BJ (cell line): ENCODE measurements at regions of chr2 and their contacts with region 1.

Region 1: DNA sequence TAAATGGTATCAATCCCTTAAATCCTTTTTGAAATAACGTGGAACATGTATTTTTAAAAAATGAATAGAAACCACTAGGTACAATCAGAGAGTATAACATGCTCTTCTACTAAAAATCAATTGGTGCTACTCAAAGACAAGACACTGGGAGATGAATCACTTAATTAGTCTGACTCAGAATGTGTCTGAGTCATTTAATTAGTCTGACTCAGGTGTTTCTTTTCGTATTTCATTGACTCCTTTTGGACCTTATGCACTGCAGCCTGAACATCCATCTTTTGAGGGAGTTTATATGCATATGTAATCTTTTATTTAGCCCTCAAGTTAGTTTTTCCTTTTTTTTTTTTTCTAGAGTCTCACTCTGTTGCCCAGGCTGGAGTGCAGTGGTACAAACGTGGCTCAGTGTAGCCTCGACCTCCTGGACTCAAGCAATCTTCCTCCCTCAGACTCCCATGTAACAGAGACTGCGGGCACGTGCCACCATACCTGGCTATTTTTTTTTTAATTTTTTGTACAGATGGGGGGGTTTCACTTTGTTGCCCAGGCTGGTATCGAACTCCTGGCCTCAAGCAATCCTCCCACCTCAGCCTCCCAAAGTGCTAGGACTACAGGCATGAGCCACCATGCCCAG is 26.5 kb downstream of the PPP4R3B start:
- DNase-seq: peak; percentile 37
- H3K4me3 ChIP-seq: no peak overlapping the region
- H3K27me3 ChIP-seq: no peaks in the 10 kb centered on the region
- CTCF ChIP-seq: no peak

Region 2: GRCh38 chr2:55565613-55566012 is 25.3 kb before region 1 on chr2:
- CTCF ChIA-PET with region 1: no interaction called
- POLR2A ChIA-PET with region 1: interaction called, 12 read pairs
- DNase-seq: no peak
- H3K4me3 ChIP-seq: no peak overlapping the region
- H3K27me3 ChIP-seq: no peaks in the 10 kb centered on the region
- CTCF ChIP-seq: no peak